ENCODE measurements at regions of chr6 and their contacts with region 1.

Region 1: DNA sequence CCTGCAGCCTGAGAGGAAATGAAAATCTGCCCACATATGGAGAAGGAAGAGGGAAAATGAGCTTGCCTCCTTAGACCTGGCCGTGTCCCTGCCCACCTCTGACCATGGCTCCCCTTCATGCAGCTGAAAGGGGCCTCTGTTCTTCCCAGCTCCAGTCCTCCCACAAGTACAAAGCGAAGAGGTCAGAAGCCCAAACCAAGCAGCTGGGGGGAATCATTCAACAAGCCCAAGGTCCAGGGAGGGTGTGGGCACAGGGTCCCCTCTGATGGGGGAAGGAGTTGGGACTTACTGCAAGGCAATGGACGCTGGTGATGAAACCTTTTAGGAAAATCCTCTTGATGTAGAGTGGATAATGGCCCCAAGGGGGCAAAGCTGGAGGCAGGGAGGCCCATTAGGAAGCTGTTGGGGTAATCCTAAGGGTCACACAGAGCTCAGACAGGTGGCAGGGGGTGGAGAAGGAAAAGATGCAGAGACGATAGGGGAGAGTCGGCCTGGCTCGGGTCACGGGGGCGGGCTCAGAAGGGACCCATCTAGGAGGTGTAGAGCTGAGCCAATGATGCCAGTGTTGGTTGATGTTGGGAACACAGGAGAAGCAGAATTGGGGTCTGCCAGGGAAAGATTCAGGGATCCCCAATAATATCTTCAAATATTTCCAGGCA is 16.1 kb upstream of the GRM4 start:
- DNase-seq: peak in 1 of 2 experiments; percentile 32
- H3K4me3 ChIP-seq: no peak overlapping the region
- H3K27ac ChIP-seq: no peak overlapping the region
- H3K4me1 ChIP-seq: no peaks in the 10 kb centered on the region
- H3K27me3 ChIP-seq: no peaks in the 10 kb centered on the region
- CTCF ChIP-seq: no peak
- EP300 ChIP-seq: no peak
- POLR2A ChIP-seq: no peak
- RAD21 ChIP-seq: no peak

Region 2: DNA sequence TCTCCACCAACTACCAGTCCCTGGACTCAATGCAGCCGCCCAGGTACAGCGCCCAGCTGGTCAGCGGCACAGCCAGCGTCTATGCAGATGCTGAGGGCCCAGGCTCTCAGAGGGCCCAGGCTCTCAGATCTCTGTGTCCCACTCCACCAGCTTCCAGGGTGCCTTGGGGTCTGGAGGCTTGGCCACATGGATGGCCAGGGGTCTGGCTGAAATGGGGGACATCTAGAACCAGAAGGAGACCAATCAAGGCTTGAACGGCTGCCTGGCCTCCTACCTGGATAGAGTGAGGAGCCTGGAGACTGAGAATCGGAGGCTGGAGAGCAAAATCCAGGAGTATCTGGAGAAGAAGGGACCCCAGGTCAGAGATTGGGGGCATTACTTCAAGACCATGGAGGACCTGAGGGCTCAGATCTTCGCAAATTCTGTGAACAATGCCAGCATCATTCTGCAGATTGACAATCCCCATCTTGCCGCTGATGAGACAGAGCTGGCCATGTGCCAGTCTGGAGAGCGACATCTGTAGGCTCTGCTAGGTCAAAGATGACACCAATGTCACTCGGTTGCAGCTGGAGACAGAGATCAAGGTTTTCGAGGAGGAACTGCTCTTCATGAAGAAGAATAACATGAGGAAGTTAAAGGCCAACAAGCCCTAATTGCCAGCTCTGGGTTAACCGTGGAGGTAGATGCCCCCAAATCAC is 28.0 kb after region 1 on chr6:
- CTCF ChIA-PET with region 1: interaction called, 23 read pairs
- POLR2A ChIA-PET with region 1: no interaction called
- DNase-seq: no peak
- H3K4me3 ChIP-seq: no peak overlapping the region
- H3K27ac ChIP-seq: no peak overlapping the region
- H3K4me1 ChIP-seq: no peaks in the 10 kb centered on the region
- H3K27me3 ChIP-seq: no peaks in the 10 kb centered on the region; a peak in 2 of 7 replicates
- CTCF ChIP-seq: no peak
- EP300 ChIP-seq: no peak
- POLR2A ChIP-seq: no peak
- RAD21 ChIP-seq: no peak

Region 3: GRCh38 chr6:34196126-34196830 is 34.3 kb after region 1 on chr6:
- CTCF ChIA-PET with region 1: interaction called, 23 read pairs
- POLR2A ChIA-PET with region 1: no interaction called
- DNase-seq: peak in 1 of 2 experiments; percentile 91
- H3K4me3 ChIP-seq: peak overlapping the region in 2 of 4 experiments; percentile 23 to 34; a peak in 4 of 8 replicates
- H3K27ac ChIP-seq: no peak overlapping the region
- H3K4me1 ChIP-seq: peaks cover 0 to 12% (median 5%) of the 10 kb centered on the region in 4 experiments; a peak in 5 of 7 replicates
- H3K27me3 ChIP-seq: peaks cover 0 to 13% (median 4%) of the 10 kb centered on the region in 4 experiments; a peak in 4 of 7 replicates
- CTCF ChIP-seq: peak; percentile 78 to 85 (median 79)
- EP300 ChIP-seq: peak in 1 of 2 experiments; percentile 28; a peak in 1 of 3 replicates
- POLR2A ChIP-seq: no peak
- RAD21 ChIP-seq: peak; percentile 74 to 76

Measured in H1 (cell line).